Caco-2 (cell line): ENCODE measurements at regions of chr11 and their contacts with region 1.

Region 1: GRCh38 chr11:59753650-59754493 is 1.3 kb upstream of the STX3 start:
- DNase-seq: peak; percentile 86 to 90
- H3K4me3 ChIP-seq: peak overlapping the region; percentile 96
- H3K4me3 Mint-ChIP-seq: peak overlapping the region; percentile 83
- H3K27ac Mint-ChIP-seq: peak overlapping the region; percentile 53
- H3K4me1 ChIP-seq: peaks cover 29% of the 10 kb centered on the region
- H3K4me1 Mint-ChIP-seq: peaks cover 19% of the 10 kb centered on the region
- H3K27me3 ChIP-seq: no peaks in the 10 kb centered on the region
- H3K27me3 Mint-ChIP-seq: no peaks in the 10 kb centered on the region
- CTCF ChIP-seq: peak; percentile 93 to 94

Region 2: GRCh38 chr11:59550368-59550841 is 203.5 kb before region 1 on chr11:
- CTCF ChIA-PET with region 1: interaction called, 7 read pairs
- POLR2A ChIA-PET with region 1: interaction called, 4 read pairs
- intact Hi-C with region 1: loop called (anchors 5 kb)
- DNase-seq: peak; percentile 96 to 97
- H3K4me3 ChIP-seq: peak overlapping the region; percentile 58
- H3K4me3 Mint-ChIP-seq: peak overlapping the region; percentile 80
- H3K27ac Mint-ChIP-seq: peak overlapping the region; percentile 100
- H3K4me1 ChIP-seq: peaks cover 28% of the 10 kb centered on the region
- H3K4me1 Mint-ChIP-seq: peaks cover 32% of the 10 kb centered on the region
- H3K27me3 ChIP-seq: no peaks in the 10 kb centered on the region
- H3K27me3 Mint-ChIP-seq: peaks cover 7% of the 10 kb centered on the region
- CTCF ChIP-seq: peak; percentile 28 to 63

Region 3: DNA sequence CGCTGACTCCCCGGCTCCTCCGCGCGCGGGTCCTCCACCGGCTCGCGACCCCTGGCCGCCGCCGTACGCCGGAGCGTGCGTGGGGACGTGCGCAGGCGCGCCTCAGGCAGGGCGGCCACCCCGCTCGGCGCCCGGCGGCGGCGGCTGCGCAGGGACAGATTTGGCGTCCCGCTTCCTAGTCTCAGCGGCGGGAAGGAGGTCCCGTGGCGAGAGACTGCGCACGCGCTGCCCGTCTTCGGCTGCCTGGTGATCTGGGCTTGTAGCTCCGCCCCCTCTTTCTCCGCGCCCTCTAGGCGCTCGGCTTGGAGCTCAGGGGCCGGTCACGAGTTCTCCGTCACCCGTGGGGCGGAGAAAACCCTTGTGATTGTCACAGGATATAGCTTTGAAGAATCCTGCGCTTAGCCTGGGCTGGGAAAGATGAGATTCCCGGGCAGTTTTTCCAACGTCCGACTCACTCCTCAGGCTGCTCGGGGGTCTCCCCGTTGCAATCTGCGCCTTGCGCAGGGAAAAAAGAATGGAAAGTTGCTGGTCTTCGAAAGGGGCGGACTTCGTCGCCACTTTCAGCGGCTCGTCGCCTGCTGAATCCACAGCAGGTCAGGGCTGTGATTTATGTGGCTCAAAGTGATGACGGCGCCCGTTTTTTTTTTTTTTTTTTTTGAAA is 84.8 kb before region 1 on chr11 and contains the start of gene PATL1:
- CTCF ChIA-PET with region 1: interaction called, 9 read pairs
- POLR2A ChIA-PET with region 1: interaction called, 18 read pairs
- intact Hi-C with region 1: loop called (anchors 2 kb)
- DNase-seq: peak; percentile 99
- H3K4me3 ChIP-seq: peak within 1 kb of the TSS; percentile 96
- H3K4me3 Mint-ChIP-seq: peak within 1 kb of the TSS; percentile 96
- H3K27ac Mint-ChIP-seq: peak within 1 kb of the TSS; percentile 100
- H3K4me1 ChIP-seq: peaks cover 5% of the 10 kb centered on the region
- H3K4me1 Mint-ChIP-seq: peaks cover 14% of the 10 kb centered on the region
- H3K27me3 ChIP-seq: no peaks in the 10 kb centered on the region
- H3K27me3 Mint-ChIP-seq: no peaks in the 10 kb centered on the region
- CTCF ChIP-seq: no peak
- total RNA-seq, gene PATL1: 57.8 and 61.4 TPM in 2 replicates

Region 4: DNA sequence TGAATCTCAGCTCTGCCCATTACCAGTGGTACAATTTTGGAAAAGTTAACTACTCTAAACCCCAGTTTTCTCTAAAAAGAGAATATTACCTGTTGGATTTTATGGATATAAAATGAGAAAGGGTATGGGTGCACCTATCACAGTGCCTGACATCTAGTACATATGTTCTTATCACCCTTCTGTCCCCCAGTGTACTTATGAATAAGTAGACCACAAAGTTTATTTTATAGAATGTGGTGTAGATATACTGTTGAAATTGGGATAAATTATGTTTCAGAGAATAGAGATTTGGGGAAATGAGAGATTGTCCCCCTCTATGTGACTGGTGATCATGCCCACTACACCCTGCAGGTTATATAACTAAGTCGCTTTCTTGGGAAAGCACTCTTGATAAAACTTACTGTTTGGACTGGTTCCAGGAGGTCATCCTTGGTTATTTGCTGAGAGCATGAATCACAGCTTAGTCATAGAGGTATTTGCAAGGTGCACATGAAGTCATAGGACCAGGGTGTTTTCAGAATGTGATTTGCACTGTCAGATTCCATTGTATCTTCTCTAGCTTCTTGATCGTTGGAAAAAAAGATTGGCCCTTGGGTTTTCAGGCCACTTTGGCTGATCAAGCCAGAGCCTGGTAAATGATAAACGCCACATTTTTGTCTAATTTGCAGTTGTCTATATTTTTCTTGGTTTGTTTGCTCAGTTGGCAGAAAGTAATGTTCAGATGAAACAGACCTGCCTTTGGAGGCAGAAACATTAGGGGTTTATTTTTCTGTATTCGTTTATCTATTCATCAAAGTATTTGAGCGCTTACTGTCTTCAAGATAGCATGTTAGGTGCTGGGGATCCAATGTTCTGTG is 22.6 kb after region 1 on chr11:
- CTCF ChIA-PET with region 1: interaction called, 5 read pairs
- POLR2A ChIA-PET with region 1: interaction called, 3 read pairs
- intact Hi-C with region 1: loop called (anchors 1 kb)
- DNase-seq: peak; percentile 68 to 79
- H3K4me3 ChIP-seq: no peak overlapping the region
- H3K4me3 Mint-ChIP-seq: peak overlapping the region; percentile 66
- H3K27ac Mint-ChIP-seq: peak overlapping the region; percentile 74
- H3K4me1 ChIP-seq: peaks cover 65% of the 10 kb centered on the region
- H3K4me1 Mint-ChIP-seq: peaks cover 57% of the 10 kb centered on the region
- H3K27me3 ChIP-seq: no peaks in the 10 kb centered on the region
- H3K27me3 Mint-ChIP-seq: no peaks in the 10 kb centered on the region
- CTCF ChIP-seq: no peak

Region 5: DNA sequence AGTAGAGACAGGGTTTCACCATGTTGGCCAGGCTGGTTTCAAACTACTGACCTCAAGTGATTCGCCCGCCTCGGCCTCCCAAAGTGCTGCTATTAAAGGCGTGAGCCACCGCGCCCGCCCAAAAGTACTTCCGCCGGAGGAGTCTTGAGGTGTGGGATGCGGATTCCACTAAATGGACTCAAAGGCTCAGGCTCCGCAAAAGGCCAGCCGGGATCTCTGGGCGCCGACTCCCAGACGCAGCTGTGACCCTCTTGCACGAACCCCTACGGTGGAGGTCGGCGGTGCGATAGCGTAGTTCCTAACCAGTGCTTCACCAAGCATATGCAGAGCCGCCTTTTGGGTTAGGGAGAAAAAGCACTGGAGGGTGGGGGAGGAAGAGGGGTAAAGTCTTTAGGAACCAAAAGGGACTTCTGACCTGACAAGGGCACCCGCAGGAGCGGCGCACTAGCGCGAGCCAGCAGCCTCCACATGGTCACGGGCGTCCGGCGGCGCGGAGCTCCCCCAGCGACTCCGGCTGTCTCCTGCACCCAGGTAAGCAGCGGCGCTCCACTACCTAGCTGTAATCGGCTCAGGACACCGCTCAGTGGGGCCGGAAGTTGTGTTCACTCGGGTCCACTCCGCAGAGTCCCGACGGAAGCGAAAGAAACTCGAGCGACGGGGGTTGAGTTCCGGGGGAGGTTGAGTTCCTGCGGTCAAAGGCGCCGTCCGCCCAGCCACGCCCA is 56.5 kb after region 1 on chr11 and contains the start of gene MRPL16:
- CTCF ChIA-PET with region 1: interaction called, 13 read pairs
- POLR2A ChIA-PET with region 1: interaction called, 6 read pairs
- intact Hi-C with region 1: no loop called
- DNase-seq: peak; percentile 95 to 97
- H3K4me3 ChIP-seq: peak within 1 kb of the TSS; percentile 83
- H3K4me3 Mint-ChIP-seq: peak within 1 kb of the TSS; percentile 96
- H3K27ac Mint-ChIP-seq: peak within 1 kb of the TSS; percentile 97
- H3K4me1 ChIP-seq: peaks cover 27% of the 10 kb centered on the region
- H3K4me1 Mint-ChIP-seq: peaks cover 37% of the 10 kb centered on the region
- H3K27me3 ChIP-seq: no peaks in the 10 kb centered on the region
- H3K27me3 Mint-ChIP-seq: no peaks in the 10 kb centered on the region
- CTCF ChIP-seq: peak; percentile 38 to 72
- total RNA-seq, gene MRPL16: 61.6 and 66.0 TPM in 2 replicates